ENCODE measurements at regions of chr2 and their contacts with region 1.

Region 1: GRCh38 chr2:60881047-60881932 is at the start of gene REL:
- DNase-seq: peak; percentile 92
- H3K4me3 ChIP-seq: peak within 1 kb of the TSS; percentile 99
- H3K27ac ChIP-seq: peak within 1 kb of the TSS; percentile 98
- H3K4me1 ChIP-seq: peaks cover 26% of the 10 kb centered on the region
- H3K27me3 ChIP-seq: no peaks in the 10 kb centered on the region
- CTCF ChIP-seq: no peak; the same call in none of the 2 replicates
- total RNA-seq, gene REL: 11.5 and 13.3 TPM in 2 replicates

Region 2: GRCh38 chr2:60806988-60807681 is 74.2 kb before region 1 on chr2:
- CTCF ChIA-PET with region 1: no interaction called
- POLR2A ChIA-PET with region 1: no interaction called
- intact Hi-C with region 1: loop called (anchors 5 kb)
- DNase-seq: peak; percentile 97
- H3K4me3 ChIP-seq: peak overlapping the region; percentile 13
- H3K27ac ChIP-seq: peak overlapping the region; percentile 95
- H3K4me1 ChIP-seq: peaks cover 35% of the 10 kb centered on the region
- H3K27me3 ChIP-seq: no peaks in the 10 kb centered on the region
- CTCF ChIP-seq: no peak

Region 3: DNA sequence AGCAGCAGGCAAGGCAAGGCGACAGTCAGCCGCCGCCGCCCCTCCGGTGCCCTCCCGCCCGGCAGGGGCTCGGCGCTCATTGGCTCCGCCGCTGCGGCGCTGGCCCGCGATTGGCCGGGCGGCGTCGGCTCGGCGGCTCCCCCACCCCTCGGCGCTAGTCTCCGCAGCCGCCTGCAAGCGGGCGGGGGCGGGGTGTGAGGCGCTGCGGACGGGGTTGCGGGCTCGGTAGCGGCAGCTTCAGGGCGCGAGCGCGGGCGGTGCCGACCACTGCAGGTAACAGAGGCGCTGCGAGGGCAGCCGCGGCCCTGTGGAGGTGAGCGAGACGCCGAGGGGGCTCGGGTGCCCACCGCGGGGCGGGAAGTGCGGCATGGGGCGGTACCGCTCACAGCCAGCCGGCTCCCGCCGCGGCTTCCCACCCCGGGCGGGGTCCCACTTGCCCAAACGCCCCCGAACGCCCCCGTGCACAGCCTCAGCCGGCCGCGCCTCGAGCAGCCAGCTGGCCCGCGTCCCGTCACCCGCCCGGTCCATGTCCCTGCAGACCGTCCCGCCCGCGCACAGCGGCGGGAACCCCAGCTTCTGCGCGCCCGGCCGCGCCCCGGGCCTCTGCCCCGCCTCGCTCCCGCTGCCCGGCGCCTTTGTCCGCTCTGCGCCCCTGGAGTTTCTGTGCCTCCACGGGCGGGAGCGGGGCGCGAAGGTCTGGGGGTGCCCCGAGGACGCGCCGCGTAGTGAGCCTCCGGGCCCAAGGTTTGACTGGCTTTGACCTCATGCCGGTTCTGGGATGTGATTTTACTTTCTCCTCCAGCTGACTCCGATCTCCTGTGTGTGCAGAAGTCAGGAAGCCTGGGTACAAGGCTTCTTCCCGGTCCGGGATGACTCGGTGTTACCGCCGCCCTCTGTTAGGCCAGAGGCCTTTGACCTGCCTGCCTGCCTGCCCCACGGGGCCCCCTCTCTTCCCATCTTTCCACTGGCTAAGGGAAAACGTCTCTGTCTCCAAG is 184.7 kb after region 1 on chr2 and contains the start of gene SANBR:
- CTCF ChIA-PET with region 1: no interaction called
- POLR2A ChIA-PET with region 1: no interaction called
- intact Hi-C with region 1: no loop called
- DNase-seq: peak; percentile 95
- H3K4me3 ChIP-seq: peak within 1 kb of the TSS; percentile 89
- H3K27ac ChIP-seq: peak within 1 kb of the TSS; percentile 70
- H3K4me1 ChIP-seq: no peaks in the 10 kb centered on the region
- H3K27me3 ChIP-seq: no peaks in the 10 kb centered on the region
- CTCF ChIP-seq: no peak
- total RNA-seq, gene SANBR: 12.1 and 15.5 TPM in 2 replicates

Region 4: GRCh38 chr2:61295981-61296380 is 414.7 kb after region 1 on chr2:
- CTCF ChIA-PET with region 1: no interaction called
- POLR2A ChIA-PET with region 1: no interaction called
- intact Hi-C with region 1: no loop called
- DNase-seq: no peak
- H3K4me3 ChIP-seq: no peak overlapping the region
- H3K27ac ChIP-seq: no peak overlapping the region
- H3K4me1 ChIP-seq: no peaks in the 10 kb centered on the region
- H3K27me3 ChIP-seq: no peaks in the 10 kb centered on the region
- CTCF ChIP-seq: no peak